ENCODE measurements at regions of chr14 and their contacts with region 1.

Region 1: GRCh38 chr14:99604283-99604765 is 317 bp upstream of the CCDC85C start:
- DNase-seq: peak; percentile 94 to 99
- H3K4me3 ChIP-seq: peak overlapping the region; percentile 81
- H3K4me3 Mint-ChIP-seq: peak overlapping the region; percentile 71
- H3K27ac Mint-ChIP-seq: no peak overlapping the region
- H3K4me1 ChIP-seq: peaks cover 30% of the 10 kb centered on the region
- H3K4me1 Mint-ChIP-seq: peaks cover 21% of the 10 kb centered on the region
- H3K27me3 ChIP-seq: no peaks in the 10 kb centered on the region
- H3K27me3 Mint-ChIP-seq: no peaks in the 10 kb centered on the region
- CTCF ChIP-seq: no peak

Region 2: DNA sequence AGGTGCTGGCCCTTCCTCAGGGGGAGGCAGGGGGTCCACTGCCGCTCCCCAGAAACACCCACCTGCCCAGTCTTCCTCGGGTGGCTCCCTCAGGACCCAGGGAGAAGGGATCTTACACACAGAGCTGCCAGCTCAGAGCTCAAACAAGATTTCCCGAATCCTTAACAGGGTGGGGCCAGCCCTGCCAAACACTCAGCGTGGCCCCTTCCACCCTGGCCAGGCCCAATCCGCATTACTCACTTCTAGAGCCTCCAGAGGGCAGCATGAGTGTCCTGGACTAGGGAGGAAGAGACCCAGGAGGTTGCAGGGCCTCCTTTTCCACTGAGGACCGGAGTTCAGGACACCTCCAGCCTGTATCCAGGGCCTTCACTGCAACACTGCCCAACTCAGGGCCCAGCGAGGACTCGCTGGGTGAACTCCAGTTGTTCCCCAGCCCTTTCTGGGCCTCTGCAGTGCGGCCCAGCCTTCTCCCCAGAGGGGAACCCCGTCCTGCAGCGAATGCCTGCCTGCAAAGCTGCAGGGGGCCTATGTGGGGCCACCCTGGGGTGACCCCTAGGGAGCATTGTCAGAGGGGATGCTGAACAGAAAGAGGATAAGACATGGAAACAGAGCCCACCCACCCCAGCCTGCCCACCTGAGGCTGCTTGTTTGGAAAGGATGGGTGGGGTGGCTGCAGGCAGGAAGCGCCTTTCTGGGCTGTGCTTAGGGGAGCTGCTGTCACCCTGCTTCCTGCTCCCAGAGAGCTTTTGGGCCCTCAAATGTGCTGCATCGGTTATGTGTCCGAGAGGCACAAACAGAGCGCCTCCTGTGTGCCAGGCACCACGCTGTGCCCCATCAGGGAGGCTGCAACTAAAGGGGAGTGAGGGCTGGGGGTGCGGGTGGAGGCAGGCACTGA is 79.3 kb before region 1 on chr14:
- CTCF ChIA-PET with region 1: interaction called, 12 read pairs
- POLR2A ChIA-PET with region 1: interaction called, 10 read pairs
- intact Hi-C with region 1: loop called (anchors 1 kb)
- DNase-seq: peak; percentile 62 to 69
- H3K4me3 ChIP-seq: no peak overlapping the region
- H3K4me3 Mint-ChIP-seq: no peak overlapping the region
- H3K27ac Mint-ChIP-seq: peak overlapping the region; percentile 84
- H3K4me1 ChIP-seq: peaks cover 47% of the 10 kb centered on the region
- H3K4me1 Mint-ChIP-seq: peaks cover 8% of the 10 kb centered on the region
- H3K27me3 ChIP-seq: no peaks in the 10 kb centered on the region
- H3K27me3 Mint-ChIP-seq: no peaks in the 10 kb centered on the region
- CTCF ChIP-seq: peak; percentile 23 to 28

Region 3: DNA sequence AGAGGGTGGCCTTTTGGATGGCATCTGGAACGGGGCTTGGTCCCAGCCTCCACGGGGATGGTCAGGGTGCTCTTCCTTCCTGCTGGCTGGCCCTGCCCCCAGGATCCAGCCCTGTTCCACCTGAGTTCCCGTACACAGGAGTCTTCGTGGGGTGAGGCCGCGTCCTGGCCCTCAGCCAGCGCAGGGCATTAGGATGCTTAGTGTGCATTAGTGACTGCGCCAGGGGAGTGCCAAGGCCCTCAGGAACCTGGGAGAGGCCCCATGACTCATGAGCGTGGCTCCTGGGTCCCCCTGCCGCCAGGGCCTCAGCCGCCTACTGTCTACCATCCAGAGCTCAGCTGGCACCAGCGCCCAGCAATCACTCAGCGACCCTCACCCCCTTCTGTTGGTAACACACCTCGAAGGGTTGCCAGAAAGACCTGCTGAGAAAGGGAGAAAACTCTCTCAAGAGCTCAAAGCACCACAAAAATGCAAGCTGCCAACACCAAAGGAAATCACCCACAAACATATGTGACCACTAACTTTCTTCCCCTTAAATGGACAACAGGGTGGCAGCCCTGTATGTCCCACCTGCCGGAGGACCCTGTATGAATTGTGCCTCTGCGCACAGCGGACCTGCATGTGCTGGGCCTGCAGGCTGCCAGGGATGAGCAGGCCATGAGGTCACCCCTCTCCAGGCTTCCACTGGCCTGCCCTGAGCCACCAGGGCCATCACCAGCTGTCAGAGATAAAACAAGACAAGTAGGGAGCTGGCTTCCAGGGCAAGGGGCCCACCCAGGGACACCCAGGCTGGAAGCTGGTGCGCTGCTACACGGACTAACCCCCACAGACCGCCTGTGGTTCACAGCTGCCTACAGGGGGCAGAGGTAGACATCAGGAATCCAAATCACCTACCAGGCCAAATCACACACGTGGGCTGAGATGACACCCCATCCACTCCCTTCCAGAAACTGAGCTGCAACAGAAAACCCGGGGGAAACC is 29.0 kb before region 1 on chr14:
- CTCF ChIA-PET with region 1: interaction called, 14 read pairs
- POLR2A ChIA-PET with region 1: interaction called, 9 read pairs
- intact Hi-C with region 1: loop called (anchors 1 kb)
- DNase-seq: peak; percentile 34 to 46
- H3K4me3 ChIP-seq: no peak overlapping the region
- H3K4me3 Mint-ChIP-seq: peak overlapping the region; percentile 61
- H3K27ac Mint-ChIP-seq: peak overlapping the region; percentile 90
- H3K4me1 ChIP-seq: peaks cover 79% of the 10 kb centered on the region
- H3K4me1 Mint-ChIP-seq: peaks cover 65% of the 10 kb centered on the region
- H3K27me3 ChIP-seq: no peaks in the 10 kb centered on the region
- H3K27me3 Mint-ChIP-seq: no peaks in the 10 kb centered on the region
- CTCF ChIP-seq: peak in 1 of 2 experiments; percentile 40

Region 4: GRCh38 chr14:99628832-99629618 is 24.7 kb after region 1 on chr14:
- CTCF ChIA-PET with region 1: interaction called, 10 read pairs
- POLR2A ChIA-PET with region 1: no interaction called
- intact Hi-C with region 1: no loop called
- DNase-seq: peak; percentile 78 to 87
- H3K4me3 ChIP-seq: no peak overlapping the region
- H3K4me3 Mint-ChIP-seq: no peak overlapping the region
- H3K27ac Mint-ChIP-seq: no peak overlapping the region
- H3K4me1 ChIP-seq: no peaks in the 10 kb centered on the region
- H3K4me1 Mint-ChIP-seq: peaks cover 7% of the 10 kb centered on the region
- H3K27me3 ChIP-seq: no peaks in the 10 kb centered on the region
- H3K27me3 Mint-ChIP-seq: no peaks in the 10 kb centered on the region
- CTCF ChIP-seq: peak; percentile 91 to 98

Region 5: DNA sequence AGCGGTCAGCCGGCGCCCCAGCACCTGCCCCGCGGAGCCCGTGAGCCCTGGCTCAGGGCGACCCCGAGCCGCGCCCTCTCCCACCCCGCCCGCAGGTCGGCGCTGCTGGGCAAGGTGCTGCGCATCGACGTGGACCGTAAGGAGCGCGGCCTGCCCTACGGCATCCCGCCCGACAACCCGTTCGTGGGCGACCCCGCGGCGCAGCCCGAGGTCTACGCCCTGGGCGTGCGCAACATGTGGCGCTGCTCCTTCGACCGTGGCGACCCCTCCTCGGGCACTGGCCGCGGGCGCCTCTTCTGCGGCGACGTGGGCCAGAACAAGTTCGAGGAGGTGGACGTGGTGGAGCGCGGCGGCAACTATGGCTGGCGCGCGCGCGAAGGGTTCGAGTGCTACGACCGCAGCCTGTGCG is 55.0 kb after region 1 on chr14:
- CTCF ChIA-PET with region 1: no interaction called
- POLR2A ChIA-PET with region 1: no interaction called
- intact Hi-C with region 1: no loop called
- DNase-seq: no peak
- H3K4me3 ChIP-seq: no peak overlapping the region
- H3K4me3 Mint-ChIP-seq: no peak overlapping the region
- H3K27ac Mint-ChIP-seq: no peak overlapping the region
- H3K4me1 ChIP-seq: no peaks in the 10 kb centered on the region
- H3K4me1 Mint-ChIP-seq: no peaks in the 10 kb centered on the region
- H3K27me3 ChIP-seq: no peaks in the 10 kb centered on the region
- H3K27me3 Mint-ChIP-seq: no peaks in the 10 kb centered on the region
- CTCF ChIP-seq: no peak

Measured in Caco-2 (cell line).